ENCODE measurements at regions of chrX and their contacts with region 1.

Region 1: DNA sequence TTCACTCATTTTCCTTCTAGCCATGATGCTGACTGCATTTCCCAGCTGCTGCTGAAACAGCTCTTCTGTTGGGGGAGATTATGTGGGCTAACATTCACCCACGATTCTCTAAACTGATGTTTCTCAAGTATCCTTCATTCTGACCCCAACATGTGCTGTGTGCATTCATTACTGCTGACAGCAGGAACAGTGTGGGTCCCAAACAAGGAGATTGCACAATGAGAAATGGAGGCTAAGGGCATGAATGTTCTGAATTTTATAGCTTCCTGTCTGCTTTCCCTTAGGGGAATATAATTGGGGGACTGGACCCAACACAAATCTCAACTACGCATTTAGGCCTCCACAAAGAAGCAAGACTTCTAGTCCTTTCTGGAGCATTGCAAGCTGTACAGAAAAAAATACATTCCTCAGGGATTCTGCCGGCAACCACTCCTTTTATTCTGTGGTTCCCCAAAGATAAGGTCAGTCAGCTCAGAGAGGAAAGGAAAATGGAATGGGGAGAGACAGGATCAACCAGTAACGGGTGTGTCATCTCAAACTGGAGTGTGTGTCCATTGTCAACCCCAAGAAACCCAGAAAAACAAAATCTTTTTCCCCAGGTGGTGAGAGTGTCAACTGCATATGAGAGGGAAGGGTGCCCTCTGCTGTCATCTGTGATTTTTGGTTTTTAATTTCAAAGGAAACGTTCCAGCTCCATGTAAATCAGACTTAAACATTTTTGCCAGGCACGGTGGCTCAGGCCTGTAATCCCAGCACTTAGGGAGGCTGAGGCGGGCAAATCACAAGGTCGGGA is 81.5 kb upstream of the EGFL6 start:
- DNase-seq: no peak

Region 2: DNA sequence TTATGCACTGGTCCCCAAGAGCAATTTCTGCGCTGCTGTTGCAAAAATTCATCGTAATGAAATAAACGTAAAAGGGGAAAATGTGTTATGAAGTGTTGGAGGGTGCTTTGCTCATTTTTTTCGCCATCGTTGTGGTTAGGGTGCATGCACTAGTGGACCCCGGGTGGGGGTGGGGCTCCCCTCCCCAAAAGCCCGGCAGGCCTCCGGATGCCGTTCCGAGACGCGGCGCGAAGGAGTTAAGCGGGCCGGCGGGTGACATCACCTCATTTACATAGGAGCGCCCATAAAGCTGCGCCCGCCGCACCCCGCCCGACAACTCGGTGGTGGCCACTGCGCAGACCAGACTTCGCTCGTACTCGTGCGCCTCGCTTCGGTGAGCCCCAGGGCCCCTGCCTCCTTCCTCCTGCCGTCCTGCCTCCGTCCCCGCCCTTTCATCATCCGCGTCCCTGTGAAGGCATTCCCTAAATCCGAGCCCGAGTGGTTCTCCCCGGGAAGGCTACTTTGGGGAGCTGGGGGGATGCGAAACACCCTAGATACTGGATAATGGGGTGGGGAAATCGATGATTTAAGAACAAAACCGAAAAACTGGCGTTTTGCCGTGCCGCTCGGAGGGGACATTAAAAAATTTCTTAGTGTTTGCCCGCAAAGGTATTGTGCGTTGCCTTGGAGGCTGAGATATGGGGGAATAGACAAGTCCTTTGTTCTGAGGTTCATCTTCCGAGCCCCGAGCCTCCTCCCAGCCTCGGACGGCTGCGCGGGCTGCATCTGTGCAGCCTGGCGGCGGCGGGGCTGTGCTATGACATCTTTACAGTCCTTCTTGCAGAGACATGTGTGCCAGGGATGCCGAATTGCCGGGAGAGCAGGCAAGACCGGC is 512.9 kb before region 1 on chrX and contains the start of gene TMSB4X:
- intact Hi-C with region 1: loop called in 1 of 2 experiments (anchors 5 kb)
- DNase-seq: peak; percentile 97
- total RNA-seq, gene TMSB4X: 3,954 to 4,090 TPM

Region 3: DNA sequence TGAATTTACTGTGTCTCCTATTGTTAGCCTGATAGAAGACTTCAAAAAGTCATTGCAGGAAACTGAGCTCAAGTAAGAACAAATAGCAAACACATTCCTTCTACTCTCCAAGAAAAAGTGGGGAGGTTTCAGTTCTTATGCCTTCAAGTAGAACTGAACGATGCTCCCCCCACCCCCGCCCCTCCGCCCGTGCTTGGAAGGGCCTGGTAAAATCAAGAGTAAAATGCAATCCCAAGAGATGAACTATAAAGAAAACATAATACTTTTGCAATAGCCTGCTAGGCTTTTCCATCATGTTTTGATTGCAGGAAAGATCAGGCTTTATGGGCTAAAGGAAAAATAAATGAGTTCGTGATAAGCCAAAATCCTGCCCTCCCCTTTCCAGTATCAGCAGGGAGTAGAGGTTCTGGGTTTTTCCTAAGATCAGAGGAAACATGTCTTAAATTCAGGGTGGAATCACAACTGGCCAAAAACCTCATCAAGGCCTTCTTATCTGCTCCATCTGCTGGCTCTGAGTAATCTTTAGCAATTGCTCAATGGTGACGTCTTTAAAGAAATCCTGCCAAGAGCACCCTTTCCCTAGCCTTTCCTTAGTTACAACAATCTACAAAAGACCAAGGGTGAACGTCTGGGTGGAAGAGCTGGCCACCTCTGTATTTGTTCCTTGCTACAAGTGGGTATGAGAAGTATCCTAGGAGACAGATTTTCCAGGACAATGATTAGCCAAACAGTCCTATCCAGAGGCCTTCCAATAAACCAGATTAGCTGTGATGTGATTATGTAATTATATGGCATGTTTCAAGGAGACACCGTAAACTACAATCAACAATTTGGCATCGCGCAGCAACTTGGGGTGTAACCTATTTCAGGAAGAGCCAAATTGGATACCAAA is 377.2 kb before region 1 on chrX:
- intact Hi-C with region 1: loop called in 1 of 2 experiments (anchors 10 kb)
- DNase-seq: peak; percentile 86

Region 4: GRCh38 chrX:13376857-13377549 is 110.9 kb before region 1 on chrX:
- intact Hi-C with region 1: loop called in 1 of 2 experiments (anchors 10 kb)
- DNase-seq: no peak

Measured in posterior vena cava (tissue), 2 donors.